ENCODE measurements at regions of chr19 and their contacts with region 1.

Region 1: DNA sequence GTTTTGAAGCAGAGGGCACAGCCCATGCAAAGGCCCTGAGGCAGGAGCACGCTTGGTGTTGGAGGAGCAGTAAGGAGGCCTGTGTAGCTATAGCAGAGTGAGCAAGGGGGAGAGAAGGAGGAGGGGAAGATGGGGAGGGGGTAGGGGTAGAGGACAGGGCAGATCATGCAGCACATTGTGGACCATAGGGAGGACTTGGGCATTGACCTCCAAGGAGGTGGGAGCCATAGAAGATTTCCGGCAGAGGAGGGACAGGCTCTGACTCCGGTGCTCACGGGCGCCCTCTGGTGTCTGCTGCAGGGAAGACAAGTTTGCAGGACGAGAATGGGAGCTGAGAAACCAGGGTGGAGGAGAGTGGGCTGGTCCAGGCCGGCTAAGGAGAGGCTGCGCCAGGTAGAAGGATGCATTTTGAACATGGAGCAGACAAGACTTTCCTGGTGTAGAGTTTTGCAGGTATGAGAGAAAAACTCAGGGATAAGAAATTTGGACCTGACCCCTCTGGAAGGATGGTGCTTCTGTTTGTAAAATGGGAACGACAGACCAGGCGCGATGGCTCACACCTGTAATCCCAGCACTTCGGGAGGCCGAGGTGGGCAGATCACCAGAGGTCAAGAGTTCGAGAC is 13.7 kb upstream of the CREB3L3 start:
- DNase-seq: peak; percentile 58 to 92 (median 76)
- ATAC-seq: peak in 3 of 4 donors; percentile 75 to 88 (median 81)
- H3K4me3 ChIP-seq: no peak overlapping the region
- H3K27ac ChIP-seq: no peak overlapping the region
- H3K4me1 ChIP-seq: peaks cover 0 to 6% (median 0%) of the 10 kb centered on the region in 12 donors
- H3K27me3 ChIP-seq: no peaks in the 10 kb centered on the region
- CTCF ChIP-seq: peak; percentile 60 to 88 (median 70)
- POLR2A ChIP-seq: no peak

Region 2: GRCh38 chr19:3818466-3818865 is 321.3 kb before region 1 on chr19:
- intact Hi-C with region 1: no loop called
- DNase-seq: no peak
- ATAC-seq: peak in 1 of 4 donors; percentile 76
- H3K4me3 ChIP-seq: peak overlapping the region in 1 of 12 donors; percentile 6
- H3K27ac ChIP-seq: no peak overlapping the region
- H3K4me1 ChIP-seq: peaks cover 0 to 18% (median 4%) of the 10 kb centered on the region in 12 donors
- H3K27me3 ChIP-seq: peaks cover 0 to 4% (median 0%) of the 10 kb centered on the region in 9 donors
- CTCF ChIP-seq: no peak
- POLR2A ChIP-seq: no peak

Region 3: DNA sequence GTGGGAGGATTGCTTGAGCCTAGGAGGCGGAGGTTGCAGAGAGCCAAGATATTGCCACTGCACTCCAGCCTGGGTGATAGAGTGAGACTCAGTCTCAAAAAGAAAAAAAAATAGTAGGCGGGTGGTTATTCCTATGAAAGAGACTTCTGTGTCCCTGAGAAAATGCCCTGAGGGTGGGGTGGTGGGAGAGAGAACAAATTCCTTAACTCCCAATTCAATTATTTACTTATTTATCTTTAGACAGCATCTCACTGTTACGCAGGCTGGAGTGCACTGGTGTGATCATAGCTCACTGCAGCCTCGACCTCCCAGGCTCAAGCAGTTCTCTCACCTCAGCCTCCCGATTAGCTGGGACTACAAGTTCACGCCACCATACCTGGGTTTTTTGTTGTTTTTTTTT is 144.1 kb before region 1 on chr19:
- intact Hi-C with region 1: loop called in 1 of 10 experiments (anchors 10 kb)
- DNase-seq: no peak
- ATAC-seq: no peak
- H3K4me3 ChIP-seq: no peak overlapping the region
- H3K27ac ChIP-seq: no peak overlapping the region
- H3K4me1 ChIP-seq: no peaks in the 10 kb centered on the region
- H3K27me3 ChIP-seq: no peaks in the 10 kb centered on the region
- CTCF ChIP-seq: no peak
- POLR2A ChIP-seq: no peak

Region 4: DNA sequence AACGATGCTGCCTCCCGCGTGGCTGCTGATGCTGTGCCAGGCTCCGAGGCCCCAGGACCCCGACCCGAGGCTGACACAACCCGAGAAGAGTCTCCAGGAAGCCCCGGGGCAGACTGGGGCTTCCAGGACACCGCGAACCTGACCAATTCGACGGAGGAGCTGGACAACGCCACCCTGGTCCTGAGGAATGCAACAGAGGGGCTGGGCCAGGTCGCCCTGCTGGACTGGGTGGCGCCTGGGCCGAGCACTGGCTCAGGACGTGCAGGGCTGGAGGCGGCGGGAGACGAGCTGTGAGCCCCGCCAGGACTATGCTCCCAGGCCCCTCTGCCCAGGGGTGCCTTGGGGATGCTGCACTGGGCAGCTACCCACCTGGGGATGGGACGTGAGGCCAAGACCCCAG is 32.0 kb after region 1 on chr19:
- intact Hi-C with region 1: no loop called
- DNase-seq: no peak
- ATAC-seq: no peak
- H3K4me3 ChIP-seq: no peak overlapping the region
- H3K27ac ChIP-seq: no peak overlapping the region
- H3K4me1 ChIP-seq: peaks cover 0 to 6% (median 1%) of the 10 kb centered on the region in 12 donors
- H3K27me3 ChIP-seq: peaks cover 0 to 34% (median 6%) of the 10 kb centered on the region in 9 donors
- CTCF ChIP-seq: no peak
- POLR2A ChIP-seq: no peak

Region 5: DNA sequence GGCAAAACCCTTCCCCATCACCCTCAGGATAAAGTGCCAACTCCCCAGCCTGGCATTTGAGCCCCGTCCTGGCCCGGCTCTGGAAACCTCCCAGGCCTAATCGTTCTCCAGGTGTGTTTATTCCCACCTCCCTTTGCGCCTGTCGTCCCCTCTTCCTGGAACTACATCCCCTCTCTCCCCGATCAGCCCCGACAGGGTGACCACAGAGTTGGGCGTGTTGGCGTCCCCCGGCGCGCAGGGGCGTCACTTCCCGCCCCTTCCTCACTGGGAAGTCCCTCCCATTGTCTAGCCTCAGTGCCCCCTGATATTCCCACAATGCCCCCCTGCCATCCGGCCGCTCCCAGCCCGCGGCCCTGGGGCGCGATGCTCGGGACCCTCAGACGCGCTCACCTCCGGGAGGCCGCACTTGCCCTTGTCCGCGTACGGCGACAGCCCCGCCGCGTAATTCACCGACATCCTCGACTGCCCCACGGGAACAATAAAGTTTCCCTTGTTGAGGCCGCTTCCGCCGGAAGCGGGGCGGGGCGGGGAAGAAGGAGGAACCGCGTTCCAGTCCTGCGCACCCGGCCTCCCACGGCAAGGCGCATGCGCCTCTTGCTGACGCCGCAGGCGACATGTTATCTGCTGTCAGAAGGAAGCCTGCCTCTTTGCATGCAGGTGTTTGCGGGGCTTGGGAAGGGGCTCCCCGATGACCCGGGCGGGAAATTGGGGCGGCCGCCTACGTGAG is 42.5 kb after region 1 on chr19 and contains the starts of genes ANKRD24 and SIRT6:
- intact Hi-C with region 1: loop called in 1 of 10 experiments (anchors 5 kb)
- DNase-seq: peak; percentile 97 to 98 (median 97)
- ATAC-seq: peak; percentile 95 to 98 (median 96)
- H3K4me3 ChIP-seq: peak within 1 kb of the TSS; percentile 70 to 98 (median 88)
- H3K27ac ChIP-seq: peak within 1 kb of the TSS; percentile 11 to 93 (median 84)
- H3K4me1 ChIP-seq: peaks cover 0 to 27% (median 15%) of the 10 kb centered on the region in 12 donors
- H3K27me3 ChIP-seq: no peaks in the 10 kb centered on the region
- CTCF ChIP-seq: no peak
- POLR2A ChIP-seq: peak in 1 of 2 donors; percentile 76
- total RNA-seq, gene ANKRD24: 0.23 to 1.4 (median 0.51) TPM in 6 of 9 donors, not detected in the others
- total RNA-seq, gene SIRT6: 10.2 to 16.7 (median 12.7) TPM

Region 6: GRCh38 chr19:4208385-4209094 is 68.8 kb after region 1 on chr19:
- intact Hi-C with region 1: loop called in 1 of 10 experiments (anchors 10 kb)
- DNase-seq: no peak
- ATAC-seq: no peak
- H3K4me3 ChIP-seq: no peak overlapping the region
- H3K27ac ChIP-seq: no peak overlapping the region
- H3K4me1 ChIP-seq: peaks cover 0 to 8% (median 0%) of the 10 kb centered on the region in 12 donors
- H3K27me3 ChIP-seq: peaks cover 0 to 11% (median 0%) of the 10 kb centered on the region in 9 donors
- CTCF ChIP-seq: peak in 7 of 12 donors; percentile 4 to 39 (median 19)
- POLR2A ChIP-seq: no peak

Measured in heart left ventricle (tissue), 16 donors.